IMR-90 (cell line): ENCODE measurements at regions of chr6 and their contacts with region 1.

Region 1: DNA sequence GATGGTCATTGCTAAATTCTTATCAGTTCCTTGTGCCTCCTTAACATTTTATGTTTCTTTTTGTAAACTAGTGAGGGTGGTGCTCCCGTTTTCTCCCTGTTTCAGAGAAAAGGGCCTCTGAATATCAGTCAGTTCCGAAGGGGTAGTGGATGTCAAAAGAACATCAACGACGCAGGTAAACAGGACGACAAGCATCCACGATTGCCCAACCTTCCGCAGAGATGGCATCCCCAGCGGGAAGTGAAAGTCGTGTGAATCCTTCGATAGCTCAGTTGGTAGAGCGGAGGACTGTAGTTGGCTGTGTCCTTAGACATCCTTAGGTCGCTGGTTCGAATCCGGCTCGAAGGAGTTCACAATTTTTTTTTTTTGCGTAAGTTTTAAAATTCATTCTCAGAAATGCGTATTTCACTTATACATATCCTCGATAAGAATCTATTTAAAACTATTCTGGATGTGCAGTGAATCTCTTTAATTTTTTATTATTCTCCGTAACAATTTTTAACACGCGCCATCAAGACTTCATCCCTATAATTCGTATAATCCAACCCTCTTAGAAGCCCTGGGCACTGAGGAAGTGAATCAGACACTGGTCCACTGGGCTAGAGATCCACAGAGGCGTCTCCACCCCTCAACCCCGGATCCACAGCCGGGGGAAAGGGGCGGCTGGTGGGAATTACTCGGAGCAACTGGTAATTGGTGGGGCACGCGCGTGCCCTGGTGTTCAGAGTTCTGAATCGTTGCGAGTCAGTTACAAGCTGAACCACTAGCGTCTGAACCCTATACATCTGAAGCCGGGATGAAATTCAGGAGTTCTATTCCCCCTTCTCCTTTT is 27.9 kb upstream of the ABT1 start:
- DNase-seq: peak; percentile 89
- ATAC-seq: peak; percentile 61
- H3K4me3 ChIP-seq: peak overlapping the region; percentile 65
- H3K27ac ChIP-seq: no peak overlapping the region; the same call in 1 of the 2 replicates
- H3K4me1 ChIP-seq: no peaks in the 10 kb centered on the region
- H3K27me3 ChIP-seq: no peaks in the 10 kb centered on the region
- CTCF ChIP-seq: peak; percentile 45
- POLR2A ChIP-seq: no peak
- RAD21 ChIP-seq: peak; percentile 54

Region 2: DNA sequence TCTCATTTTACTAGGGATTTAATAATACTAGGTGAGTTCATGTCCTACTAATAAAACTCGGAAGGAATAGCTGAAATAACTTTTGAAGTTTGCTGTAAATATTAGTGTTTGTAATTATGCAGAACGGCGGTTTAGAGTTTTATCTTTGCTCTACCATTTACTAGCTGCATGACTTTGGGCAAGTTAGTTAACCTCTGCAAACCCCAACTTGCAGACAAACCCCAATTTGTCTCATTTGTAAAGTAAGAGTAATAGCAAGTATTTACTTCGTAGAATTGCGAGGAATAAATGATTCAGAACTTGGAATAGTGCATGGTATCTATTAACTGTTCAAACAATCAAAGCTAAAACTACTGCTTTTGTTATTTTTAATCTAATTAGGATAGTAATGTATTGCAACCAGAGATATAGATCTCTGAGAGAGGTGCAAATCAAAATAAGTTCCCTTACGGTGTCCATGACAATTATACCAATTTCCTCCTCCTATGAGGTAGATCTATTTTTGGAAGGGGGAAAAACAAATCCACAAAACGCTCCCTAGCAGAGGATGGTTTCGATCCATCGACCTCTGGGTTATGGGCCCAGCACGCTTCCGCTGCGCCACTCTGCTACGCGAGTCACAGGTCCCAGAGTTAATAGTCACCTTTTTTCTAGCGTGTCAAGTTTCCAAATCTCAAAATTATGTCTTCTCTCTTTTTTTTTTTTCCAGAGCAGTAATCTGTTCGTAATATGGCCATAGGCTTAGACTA is 238.9 kb before region 1 on chr6:
- CTCF ChIA-PET with region 1: no interaction called
- POLR2A ChIA-PET with region 1: no interaction called
- dilution Hi-C with region 1: no loop called
- in situ Hi-C with region 1: loop called (anchors 5 kb)
- intact Hi-C with region 1: no loop called
- DNase-seq: peak; percentile 68
- ATAC-seq: 0 out of 2 replicates have a peak, but pooled peaks have one; percentile 19
- H3K4me3 ChIP-seq: no peak overlapping the region
- H3K27ac ChIP-seq: no peak overlapping the region
- H3K4me1 ChIP-seq: 0 out of 2 replicates have a peak, but pooled peaks cover 2% of the 10 kb centered on the region
- H3K27me3 ChIP-seq: no peaks in the 10 kb centered on the region
- CTCF ChIP-seq: no peak
- POLR2A ChIP-seq: no peak
- RAD21 ChIP-seq: no peak

Region 3: DNA sequence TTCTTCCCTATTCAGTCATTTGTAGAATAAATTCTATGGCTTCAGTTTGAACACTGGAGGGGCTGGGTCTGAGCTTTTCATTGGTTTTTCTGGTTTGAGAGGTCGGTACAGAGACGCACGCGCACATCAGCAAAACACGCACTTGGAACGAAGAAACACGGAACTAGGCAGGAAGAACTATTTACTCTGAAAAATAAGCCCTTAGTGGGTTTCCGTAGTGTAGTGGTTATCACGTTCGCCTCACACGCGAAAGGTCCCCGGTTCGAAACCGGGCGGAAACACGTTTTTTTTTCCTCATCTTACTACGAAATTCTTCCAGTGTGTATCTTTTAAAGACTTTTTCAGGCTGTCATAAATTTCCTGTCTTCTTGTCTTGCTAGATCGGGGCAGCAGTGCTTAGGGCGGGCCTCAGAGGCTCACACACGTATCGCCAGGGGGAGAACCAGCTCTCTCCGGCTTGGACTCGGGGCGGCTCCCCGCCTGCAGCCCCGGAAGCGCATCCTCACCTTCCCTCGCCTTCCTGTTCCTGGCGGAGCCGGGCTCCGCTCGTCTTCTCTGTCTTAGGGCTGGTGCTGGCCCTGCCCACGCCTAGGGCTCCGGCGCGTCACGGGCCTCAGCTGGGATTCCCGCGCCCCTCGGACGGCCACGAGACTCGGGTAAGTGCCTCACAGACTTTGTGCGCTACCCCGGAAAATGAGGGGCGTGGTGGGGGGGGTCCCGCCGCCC is 30.8 kb before region 1 on chr6 and contains the start of gene HMGN4:
- CTCF ChIA-PET with region 1: no interaction called
- POLR2A ChIA-PET with region 1: no interaction called
- dilution Hi-C with region 1: no loop called
- in situ Hi-C with region 1: no loop called
- intact Hi-C with region 1: loop called (anchors 1 kb)
- DNase-seq: peak; percentile 90
- ATAC-seq: peak; percentile 72
- H3K4me3 ChIP-seq: peak within 1 kb of the TSS; percentile 62
- H3K27ac ChIP-seq: peak within 1 kb of the TSS; percentile 91
- H3K4me1 ChIP-seq: peaks cover 2% of the 10 kb centered on the region; the same call in 1 of the 2 replicates
- H3K27me3 ChIP-seq: no peaks in the 10 kb centered on the region
- CTCF ChIP-seq: 0 out of 2 replicates have a peak, but pooled peaks have one; percentile 1
- POLR2A ChIP-seq: peak; percentile 74
- RAD21 ChIP-seq: peak; percentile 6; the same call in 1 of the 2 replicates
- total RNA-seq, gene HMGN4: 49.2 and 50.2 TPM in 2 replicates

Region 4: DNA sequence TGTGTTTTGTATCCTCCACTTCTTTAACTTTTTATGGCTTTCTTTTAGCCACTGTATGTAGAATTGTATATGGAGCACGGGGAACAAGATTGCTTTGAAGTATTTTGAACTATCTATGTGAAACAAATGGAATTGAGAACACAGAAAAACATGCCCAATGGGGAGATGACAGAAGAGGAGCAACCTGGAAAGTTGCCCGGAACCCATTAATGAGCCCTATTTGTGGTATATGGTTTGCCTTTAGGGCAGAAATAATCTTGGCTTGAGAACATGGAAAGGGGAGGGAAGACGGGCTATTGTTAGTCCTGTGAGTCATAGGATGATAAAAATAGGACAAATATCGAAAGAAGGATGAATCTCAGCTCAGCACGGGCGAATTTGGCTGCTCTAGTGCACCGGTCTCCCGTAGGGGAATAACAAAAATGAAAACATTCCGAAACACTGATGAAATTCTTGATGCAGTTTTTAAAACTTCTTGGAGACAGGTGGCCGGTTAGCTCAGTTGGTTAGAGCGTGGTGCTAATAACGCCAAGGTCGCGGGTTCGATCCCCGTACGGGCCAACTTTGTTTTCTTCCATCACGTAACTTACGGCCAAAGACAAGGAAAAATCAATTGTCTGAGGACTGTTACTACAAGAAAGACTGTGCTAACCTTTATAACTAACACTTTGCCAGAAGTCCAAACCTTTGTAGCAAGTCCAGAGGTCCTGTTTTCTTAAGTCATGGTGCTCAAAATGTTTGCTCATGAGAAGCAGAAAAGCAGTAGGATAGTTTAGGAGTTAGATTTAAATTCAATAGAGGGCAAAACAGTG is 15.0 kb before region 1 on chr6:
- CTCF ChIA-PET with region 1: interaction called, 3 read pairs
- POLR2A ChIA-PET with region 1: interaction called, 3 read pairs
- dilution Hi-C with region 1: no loop called
- in situ Hi-C with region 1: no loop called
- intact Hi-C with region 1: loop called (anchors 1 kb)
- DNase-seq: peak; percentile 92
- ATAC-seq: peak; percentile 50
- H3K4me3 ChIP-seq: peak overlapping the region; percentile 58
- H3K27ac ChIP-seq: no peak overlapping the region
- H3K4me1 ChIP-seq: no peaks in the 10 kb centered on the region
- H3K27me3 ChIP-seq: no peaks in the 10 kb centered on the region
- CTCF ChIP-seq: no peak
- POLR2A ChIP-seq: no peak
- RAD21 ChIP-seq: no peak

Region 5: GRCh38 chr6:26596579-26597388 is 28.0 kb after region 1 on chr6 and contains the start of gene ABT1:
- CTCF ChIA-PET with region 1: interaction called, 19 read pairs
- POLR2A ChIA-PET with region 1: no interaction called
- dilution Hi-C with region 1: no loop called
- in situ Hi-C with region 1: no loop called
- intact Hi-C with region 1: loop called (anchors 1 kb)
- DNase-seq: peak; percentile 98
- ATAC-seq: peak; percentile 83
- H3K4me3 ChIP-seq: peak within 1 kb of the TSS; percentile 91
- H3K27ac ChIP-seq: peak within 1 kb of the TSS; percentile 85
- H3K4me1 ChIP-seq: peaks cover 3% of the 10 kb centered on the region; the same call in 1 of the 2 replicates
- H3K27me3 ChIP-seq: no peaks in the 10 kb centered on the region
- CTCF ChIP-seq: no peak
- POLR2A ChIP-seq: peak; percentile 71; the same call in 1 of the 2 replicates
- RAD21 ChIP-seq: no peak
- total RNA-seq, gene ABT1: 12.2 and 15.4 TPM in 2 replicates

Region 6: GRCh38 chr6:27049863-27050781 is 481.3 kb after region 1 on chr6:
- CTCF ChIA-PET with region 1: no interaction called
- POLR2A ChIA-PET with region 1: no interaction called
- dilution Hi-C with region 1: no loop called
- in situ Hi-C with region 1: no loop called
- intact Hi-C with region 1: no loop called
- DNase-seq: no peak
- ATAC-seq: no peak
- H3K4me3 ChIP-seq: no peak overlapping the region
- H3K27ac ChIP-seq: no peak overlapping the region
- H3K4me1 ChIP-seq: no peaks in the 10 kb centered on the region
- H3K27me3 ChIP-seq: no peaks in the 10 kb centered on the region
- CTCF ChIP-seq: no peak
- POLR2A ChIP-seq: no peak
- RAD21 ChIP-seq: no peak

Region 7: DNA sequence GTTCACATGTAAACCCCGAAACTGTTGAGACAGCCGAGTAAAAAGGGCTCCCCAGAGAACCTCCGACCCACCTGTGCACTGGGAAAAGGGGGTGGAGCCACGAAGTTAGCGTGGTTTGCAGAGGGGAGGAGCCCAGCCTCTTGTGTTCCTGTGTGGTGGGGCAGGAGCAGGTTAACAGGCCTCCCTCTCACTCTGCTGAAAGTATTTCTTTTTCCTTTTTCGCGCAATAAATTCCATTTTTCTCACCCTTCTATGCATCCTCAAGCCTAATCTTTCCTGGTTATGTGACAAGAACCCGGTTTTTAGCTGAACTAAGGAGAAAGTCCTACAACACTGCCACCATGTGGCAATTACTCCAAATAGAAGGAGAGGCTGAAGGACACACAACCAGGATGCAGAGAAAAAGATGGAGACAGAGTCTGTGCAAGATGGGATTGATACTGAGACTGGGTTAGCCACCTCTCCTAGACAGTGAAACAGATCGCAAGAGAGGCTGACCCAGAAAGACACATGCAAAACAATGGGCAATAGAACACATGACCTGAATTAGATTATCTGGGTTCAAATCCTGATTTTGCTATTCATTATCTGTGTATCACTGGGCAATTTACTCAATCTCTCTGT is 510.0 kb after region 1 on chr6:
- CTCF ChIA-PET with region 1: no interaction called
- POLR2A ChIA-PET with region 1: no interaction called
- dilution Hi-C with region 1: no loop called
- in situ Hi-C with region 1: no loop called
- intact Hi-C with region 1: loop called (anchors 1 kb)
- DNase-seq: peak; percentile 68
- ATAC-seq: peak; percentile 98
- H3K4me3 ChIP-seq: no peak overlapping the region
- H3K27ac ChIP-seq: no peak overlapping the region
- H3K4me1 ChIP-seq: no peaks in the 10 kb centered on the region
- H3K27me3 ChIP-seq: peaks cover 5% of the 10 kb centered on the region
- CTCF ChIP-seq: peak; percentile 73
- POLR2A ChIP-seq: no peak
- RAD21 ChIP-seq: peak; percentile 74